CD8-positive, alpha-beta memory T cell (primary cell): ENCODE measurements at regions of chr10 and their contacts with region 1.

Region 1: DNA sequence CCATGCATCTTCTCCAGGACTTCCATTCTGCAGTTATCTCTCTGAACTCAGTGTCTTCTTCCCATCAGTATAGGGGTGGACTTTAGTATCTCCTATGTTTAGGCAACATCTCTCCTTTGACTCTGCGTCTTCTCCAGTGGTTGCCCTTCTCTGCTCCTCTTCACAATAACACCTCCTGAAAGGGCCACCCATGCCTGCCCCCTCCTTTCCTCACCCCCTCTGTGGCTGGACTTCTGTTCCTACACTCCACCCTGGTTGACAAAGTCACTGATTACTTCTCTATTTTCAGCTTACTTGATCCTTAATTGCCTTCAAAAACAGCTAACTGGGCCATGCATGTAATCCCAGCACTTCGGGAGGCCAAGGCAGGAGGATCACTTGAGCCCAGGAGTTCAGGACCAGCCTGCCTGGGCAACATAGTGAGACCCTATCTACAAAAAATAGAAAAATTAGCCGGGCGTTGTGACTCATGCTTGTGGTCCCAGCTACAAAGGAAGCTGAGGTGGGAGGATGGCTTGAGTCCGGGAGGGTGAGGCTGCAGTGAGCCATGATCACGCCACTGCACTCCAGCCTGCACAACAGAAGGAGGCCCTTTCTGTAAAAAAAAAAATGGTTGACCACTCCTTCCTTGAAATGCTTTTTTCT is 13.7 kb downstream of the SRGN start:
- DNase-seq: peak in 2 of 5 donors; percentile 19 to 53
- H3K4me3 ChIP-seq: no peak overlapping the region
- H3K4me3 Mint-ChIP-seq: peak overlapping the region; percentile 4 to 68 (median 26)
- H3K27ac ChIP-seq: no peak overlapping the region
- H3K27ac Mint-ChIP-seq: peak overlapping the region in 6 of 8 donors; percentile 57 to 91 (median 78)
- H3K4me1 ChIP-seq: peaks cover 13% of the 10 kb centered on the region
- H3K4me1 Mint-ChIP-seq: peaks cover 35 to 60% (median 37%) of the 10 kb centered on the region in 3 donors
- H3K27me3 ChIP-seq: no peaks in the 10 kb centered on the region
- H3K27me3 Mint-ChIP-seq: no peaks in the 10 kb centered on the region

Region 2: GRCh38 chr10:68981074-68981473 is 120.5 kb before region 1 on chr10:
- CTCF ChIA-PET with region 1: no interaction called
- POLR2A ChIA-PET with region 1: interaction called, 10 read pairs
- DNase-seq: no peak
- H3K4me3 ChIP-seq: no peak overlapping the region
- H3K4me3 Mint-ChIP-seq: no peak overlapping the region
- H3K27ac ChIP-seq: no peak overlapping the region
- H3K27ac Mint-ChIP-seq: peak overlapping the region in 2 of 8 donors; percentile 45 to 83
- H3K4me1 ChIP-seq: no peaks in the 10 kb centered on the region
- H3K4me1 Mint-ChIP-seq: peaks cover 0 to 4% (median 4%) of the 10 kb centered on the region in 3 donors
- H3K27me3 ChIP-seq: no peaks in the 10 kb centered on the region
- H3K27me3 Mint-ChIP-seq: no peaks in the 10 kb centered on the region

Region 3: GRCh38 chr10:69051303-69051702 is 50.3 kb before region 1 on chr10:
- CTCF ChIA-PET with region 1: no interaction called
- POLR2A ChIA-PET with region 1: no interaction called
- DNase-seq: no peak
- H3K4me3 ChIP-seq: no peak overlapping the region
- H3K4me3 Mint-ChIP-seq: no peak overlapping the region
- H3K27ac ChIP-seq: no peak overlapping the region
- H3K27ac Mint-ChIP-seq: peak overlapping the region in 2 of 8 donors; percentile 6 to 67
- H3K4me1 ChIP-seq: peaks cover 18% of the 10 kb centered on the region
- H3K4me1 Mint-ChIP-seq: peaks cover 23 to 34% (median 32%) of the 10 kb centered on the region in 3 donors
- H3K27me3 ChIP-seq: no peaks in the 10 kb centered on the region
- H3K27me3 Mint-ChIP-seq: no peaks in the 10 kb centered on the region